H1 (cell line): ENCODE measurements at regions of chr2 and their contacts with region 1.

Region 1: GRCh38 chr2:44668336-44668735 is 273.2 kb upstream of the SIX3 start:
- DNase-seq: no peak
- H3K4me3 ChIP-seq: no peak overlapping the region
- H3K27ac ChIP-seq: no peak overlapping the region
- H3K4me1 ChIP-seq: peaks cover 0 to 5% (median under 1%) of the 10 kb centered on the region in 4 experiments; a peak in 2 of 7 replicates
- H3K27me3 ChIP-seq: no peaks in the 10 kb centered on the region
- CTCF ChIP-seq: peak in 2 of 3 experiments; percentile 56 to 77; a peak in 2 of 4 replicates
- EP300 ChIP-seq: no peak
- POLR2A ChIP-seq: no peak
- RAD21 ChIP-seq: peak; percentile 65 to 71

Region 2: DNA sequence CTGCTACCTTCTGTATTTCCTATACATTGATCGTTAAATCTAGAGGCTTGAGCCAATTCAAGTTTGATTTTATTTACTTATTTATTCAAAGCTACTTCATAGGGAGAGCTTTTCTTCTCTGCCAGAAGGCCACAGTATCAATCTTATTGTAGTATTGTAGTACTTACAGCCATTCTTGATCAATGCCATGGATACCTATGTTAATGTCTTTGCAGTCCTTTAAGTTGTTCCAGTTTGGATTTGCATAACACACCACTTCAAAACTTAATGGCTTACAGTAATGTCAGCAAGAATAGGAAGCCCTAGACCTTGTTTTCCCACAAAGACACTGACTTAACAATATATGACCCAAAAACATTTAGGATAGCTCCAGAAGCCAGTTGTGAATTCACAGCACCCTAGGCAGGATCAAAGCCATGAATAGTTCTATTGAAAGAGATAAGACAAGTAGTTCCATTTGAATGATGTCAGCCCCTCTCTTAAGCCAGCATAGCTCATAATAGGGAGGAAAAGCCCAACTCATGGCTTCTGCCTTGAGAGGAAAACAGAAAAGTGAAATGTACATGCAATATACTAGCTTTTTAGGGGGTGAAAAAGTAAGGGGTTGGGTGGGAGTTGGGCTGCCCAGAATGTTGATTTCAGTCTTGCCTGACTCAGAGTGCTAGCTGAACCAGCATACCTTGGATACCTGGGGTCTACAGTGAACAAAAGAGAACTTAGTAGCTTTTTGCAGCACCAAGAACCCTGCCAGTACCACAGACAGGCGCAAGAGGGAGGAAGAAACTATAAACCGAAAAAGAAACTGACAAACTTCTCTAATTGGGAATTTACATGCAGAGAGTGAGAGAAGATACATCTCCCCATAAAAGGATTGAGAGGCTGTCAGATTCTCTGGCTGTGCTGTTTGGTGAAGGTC is 205.1 kb before region 1 on chr2:
- CTCF ChIA-PET with region 1: interaction called, 10 read pairs
- POLR2A ChIA-PET with region 1: no interaction called
- DNase-seq: peak in 1 of 2 experiments; percentile 17
- H3K4me3 ChIP-seq: peak overlapping the region in 1 of 4 experiments; percentile 35; a peak in 1 of 8 replicates
- H3K27ac ChIP-seq: peak overlapping the region; percentile 71; the same call in 1 of the 2 replicates
- H3K4me1 ChIP-seq: peaks cover 0 to 13% (median 6%) of the 10 kb centered on the region in 4 experiments; a peak in 4 of 7 replicates
- H3K27me3 ChIP-seq: no peaks in the 10 kb centered on the region
- CTCF ChIP-seq: peak in 2 of 3 experiments; percentile 40 to 49; a peak in 3 of 4 replicates
- EP300 ChIP-seq: no peak
- POLR2A ChIP-seq: no peak
- RAD21 ChIP-seq: peak; percentile 35 to 42

Region 3: DNA sequence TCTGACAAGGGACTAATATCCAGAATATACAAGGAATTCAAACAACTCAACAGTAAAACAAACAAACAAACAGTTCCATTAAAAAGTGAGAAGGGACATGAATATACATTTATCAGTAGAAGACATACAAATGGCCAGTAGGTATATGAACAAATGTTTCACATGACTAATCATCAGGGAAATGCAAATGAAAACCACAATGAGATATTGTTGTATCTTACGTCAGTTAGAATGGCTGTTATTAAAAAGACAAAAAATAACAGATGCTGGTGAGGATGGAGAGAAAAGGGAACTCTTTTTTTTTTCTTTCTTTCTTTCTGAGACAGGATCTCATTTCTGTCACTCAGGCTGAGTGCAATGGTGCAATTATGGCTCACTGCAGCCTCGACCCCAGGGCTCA is 131.1 kb before region 1 on chr2:
- CTCF ChIA-PET with region 1: no interaction called
- POLR2A ChIA-PET with region 1: no interaction called
- DNase-seq: no peak
- H3K4me3 ChIP-seq: no peak overlapping the region
- H3K27ac ChIP-seq: no peak overlapping the region
- H3K4me1 ChIP-seq: peaks cover 0 to 2% (median 0%) of the 10 kb centered on the region in 4 experiments; a peak in 2 of 7 replicates
- H3K27me3 ChIP-seq: no peaks in the 10 kb centered on the region
- CTCF ChIP-seq: no peak
- EP300 ChIP-seq: no peak
- POLR2A ChIP-seq: no peak
- RAD21 ChIP-seq: no peak

Region 4: GRCh38 chr2:44635725-44636124 is 32.6 kb before region 1 on chr2:
- CTCF ChIA-PET with region 1: interaction called, 13 read pairs
- POLR2A ChIA-PET with region 1: no interaction called
- DNase-seq: no peak
- H3K4me3 ChIP-seq: no peak overlapping the region
- H3K27ac ChIP-seq: no peak overlapping the region
- H3K4me1 ChIP-seq: peaks cover 0 to 4% (median 1%) of the 10 kb centered on the region in 4 experiments; a peak in 2 of 7 replicates
- H3K27me3 ChIP-seq: no peaks in the 10 kb centered on the region
- CTCF ChIP-seq: no peak
- EP300 ChIP-seq: no peak
- POLR2A ChIP-seq: no peak
- RAD21 ChIP-seq: no peak

Region 5: DNA sequence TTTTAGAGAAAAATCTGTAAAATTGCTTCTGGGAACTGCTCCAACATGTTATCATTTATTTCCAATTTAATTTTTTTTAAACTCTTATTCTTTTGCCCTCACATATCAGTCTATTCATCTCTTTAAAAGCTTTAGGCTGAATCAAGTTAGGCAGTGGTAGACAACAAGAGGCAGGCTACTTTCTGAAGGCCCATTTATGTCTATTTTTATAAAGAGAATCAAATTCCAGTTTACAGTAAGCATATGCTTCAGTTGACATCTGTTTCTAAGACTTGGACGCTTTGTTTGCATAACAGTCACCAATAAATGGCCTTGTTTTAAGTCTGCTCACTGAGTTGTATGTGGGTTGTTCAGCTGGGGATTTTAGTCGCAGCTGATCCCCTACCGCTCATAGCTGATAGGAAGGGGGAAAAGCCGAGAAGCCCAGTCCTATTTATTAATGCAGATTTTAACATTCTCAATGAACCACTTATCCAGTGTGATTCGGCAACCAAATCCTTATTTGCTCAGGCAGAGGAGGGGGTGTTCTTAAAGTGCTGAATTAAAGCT is 12.7 kb after region 1 on chr2:
- CTCF ChIA-PET with region 1: interaction called, 19 read pairs
- POLR2A ChIA-PET with region 1: no interaction called
- DNase-seq: no peak
- H3K4me3 ChIP-seq: no peak overlapping the region
- H3K27ac ChIP-seq: no peak overlapping the region
- H3K4me1 ChIP-seq: peaks cover 0 to 11% (median 2%) of the 10 kb centered on the region in 4 experiments; a peak in 4 of 7 replicates
- H3K27me3 ChIP-seq: no peaks in the 10 kb centered on the region
- CTCF ChIP-seq: no peak
- EP300 ChIP-seq: no peak
- POLR2A ChIP-seq: no peak
- RAD21 ChIP-seq: no peak

Region 6: GRCh38 chr2:44692821-44693220 is 24.5 kb after region 1 on chr2:
- CTCF ChIA-PET with region 1: interaction called, 10 read pairs
- POLR2A ChIA-PET with region 1: no interaction called
- DNase-seq: no peak
- H3K4me3 ChIP-seq: no peak overlapping the region
- H3K27ac ChIP-seq: no peak overlapping the region
- H3K4me1 ChIP-seq: no peaks in the 10 kb centered on the region
- H3K27me3 ChIP-seq: no peaks in the 10 kb centered on the region
- CTCF ChIP-seq: no peak
- EP300 ChIP-seq: no peak
- POLR2A ChIP-seq: no peak
- RAD21 ChIP-seq: no peak